GM13977 (cell line): ENCODE measurements at regions of chr7 and their contacts with region 1.

Region 1: DNA sequence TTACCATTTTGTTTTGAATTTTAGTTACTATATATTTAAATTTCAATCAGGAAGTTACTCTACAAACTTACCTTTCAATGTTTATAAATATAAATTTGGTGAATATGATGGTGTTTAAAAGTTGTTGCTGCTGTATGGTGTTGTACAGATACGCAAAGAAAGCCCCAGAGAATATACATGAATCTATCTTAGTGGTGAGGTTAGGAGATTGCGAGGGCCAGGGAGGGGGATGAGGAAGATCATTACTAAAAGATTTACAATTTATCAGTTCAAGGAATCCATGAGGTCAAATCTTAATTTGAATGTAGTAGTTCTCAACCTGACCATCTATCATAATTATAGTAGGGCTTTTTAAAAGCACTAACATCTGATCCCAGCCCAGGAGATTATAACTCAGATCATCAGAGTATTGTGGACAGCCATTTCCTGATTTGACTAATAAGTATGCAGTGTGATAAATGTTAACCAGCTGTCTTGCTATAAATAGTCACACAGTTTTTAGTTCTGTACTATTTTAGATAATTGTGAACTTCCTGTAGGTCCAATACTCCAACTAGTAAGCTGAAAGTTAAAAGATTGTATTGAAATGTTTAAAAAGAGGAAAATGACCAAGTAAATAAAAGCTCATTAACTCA is 23.6 kb downstream of the FAM3C start:
- DNase-seq: peak; percentile 42
- CTCF ChIP-seq: no peak

Region 2: GRCh38 chr7:121547544-121548092 is 175.1 kb after region 1 on chr7:
- in situ Hi-C with region 1: loop called (anchors 10 kb)
- DNase-seq: peak; percentile 42
- CTCF ChIP-seq: peak; percentile 67